CD14-positive monocyte (primary cell): ENCODE measurements at regions of chr13 and their contacts with region 1.

Region 1: DNA sequence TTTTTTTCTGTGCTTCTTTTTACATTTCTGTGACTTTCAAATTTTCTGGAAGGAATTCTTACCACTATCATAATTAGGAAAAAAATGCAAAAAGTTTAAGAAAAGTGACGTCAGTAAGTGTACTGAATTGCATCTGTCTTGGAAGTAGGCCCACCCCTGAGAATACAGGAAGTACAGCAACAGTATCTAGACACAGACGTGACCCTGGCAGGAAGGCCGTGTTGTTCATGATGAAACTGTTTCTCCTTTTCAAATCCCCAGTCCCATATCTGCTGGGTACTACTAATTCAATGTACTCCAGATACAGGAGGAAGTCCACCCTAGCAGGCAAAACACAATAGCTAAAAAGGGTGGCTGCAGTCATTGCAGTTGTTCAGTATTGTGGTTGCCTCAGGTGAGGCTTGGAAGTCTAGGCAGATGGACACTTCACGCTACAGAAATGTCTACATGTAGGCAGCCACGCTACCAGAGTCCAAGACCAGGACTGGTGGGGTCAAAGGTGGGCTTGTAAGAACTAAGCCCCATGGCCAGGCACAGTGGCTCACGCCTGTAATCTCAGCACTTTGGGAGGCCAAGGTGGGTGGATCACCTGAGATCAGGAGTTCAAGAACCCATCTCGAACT is 49.6 kb upstream of the MED4 start:
- DNase-seq: peak; percentile 91 to 95 (median 93)
- H3K4me3 ChIP-seq: peak overlapping the region in 1 of 3 experiments; percentile 36
- H3K4me3 Mint-ChIP-seq: peak overlapping the region in 1 of 2 donors; percentile 26
- H3K27ac ChIP-seq: peak overlapping the region; percentile 85 to 89
- H3K27ac Mint-ChIP-seq: peak overlapping the region; percentile 86 to 95 (median 94)
- H3K4me1 ChIP-seq: peaks cover 44 to 47% of the 10 kb centered on the region in 2 donors
- H3K4me1 Mint-ChIP-seq: peaks cover 47% of the 10 kb centered on the region
- H3K27me3 ChIP-seq: no peaks in the 10 kb centered on the region
- H3K27me3 Mint-ChIP-seq: peaks cover 0 to 2% (median 0%) of the 10 kb centered on the region in 3 donors
- CTCF ChIP-seq: no peak

Region 2: GRCh38 chr13:48160606-48161278 is 16.2 kb after region 1 on chr13:
- intact Hi-C with region 1: loop called in 1 of 2 experiments (anchors 2 kb)
- DNase-seq: peak in 2 of 3 donors; percentile 47 to 49
- H3K4me3 ChIP-seq: peak overlapping the region in 1 of 3 experiments; percentile 59
- H3K4me3 Mint-ChIP-seq: peak overlapping the region; percentile 45 to 64
- H3K27ac ChIP-seq: peak overlapping the region; percentile 96 to 99
- H3K27ac Mint-ChIP-seq: peak overlapping the region; percentile 98 to 99 (median 99)
- H3K4me1 ChIP-seq: peaks cover 72 to 83% of the 10 kb centered on the region in 2 donors
- H3K4me1 Mint-ChIP-seq: peaks cover 72% of the 10 kb centered on the region
- H3K27me3 ChIP-seq: no peaks in the 10 kb centered on the region
- H3K27me3 Mint-ChIP-seq: peaks cover 0 to 7% (median 0%) of the 10 kb centered on the region in 3 donors
- CTCF ChIP-seq: no peak

Region 3: GRCh38 chr13:48184260-48184659 is 39.7 kb after region 1 on chr13:
- intact Hi-C with region 1: no loop called
- DNase-seq: no peak
- H3K4me3 ChIP-seq: no peak overlapping the region
- H3K4me3 Mint-ChIP-seq: no peak overlapping the region
- H3K27ac ChIP-seq: no peak overlapping the region
- H3K27ac Mint-ChIP-seq: no peak overlapping the region
- H3K4me1 ChIP-seq: peaks cover 39 to 48% of the 10 kb centered on the region in 2 donors
- H3K4me1 Mint-ChIP-seq: peaks cover 38% of the 10 kb centered on the region
- H3K27me3 ChIP-seq: no peaks in the 10 kb centered on the region
- H3K27me3 Mint-ChIP-seq: peaks cover 0 to 2% (median 0%) of the 10 kb centered on the region in 3 donors
- CTCF ChIP-seq: no peak

Region 4: DNA sequence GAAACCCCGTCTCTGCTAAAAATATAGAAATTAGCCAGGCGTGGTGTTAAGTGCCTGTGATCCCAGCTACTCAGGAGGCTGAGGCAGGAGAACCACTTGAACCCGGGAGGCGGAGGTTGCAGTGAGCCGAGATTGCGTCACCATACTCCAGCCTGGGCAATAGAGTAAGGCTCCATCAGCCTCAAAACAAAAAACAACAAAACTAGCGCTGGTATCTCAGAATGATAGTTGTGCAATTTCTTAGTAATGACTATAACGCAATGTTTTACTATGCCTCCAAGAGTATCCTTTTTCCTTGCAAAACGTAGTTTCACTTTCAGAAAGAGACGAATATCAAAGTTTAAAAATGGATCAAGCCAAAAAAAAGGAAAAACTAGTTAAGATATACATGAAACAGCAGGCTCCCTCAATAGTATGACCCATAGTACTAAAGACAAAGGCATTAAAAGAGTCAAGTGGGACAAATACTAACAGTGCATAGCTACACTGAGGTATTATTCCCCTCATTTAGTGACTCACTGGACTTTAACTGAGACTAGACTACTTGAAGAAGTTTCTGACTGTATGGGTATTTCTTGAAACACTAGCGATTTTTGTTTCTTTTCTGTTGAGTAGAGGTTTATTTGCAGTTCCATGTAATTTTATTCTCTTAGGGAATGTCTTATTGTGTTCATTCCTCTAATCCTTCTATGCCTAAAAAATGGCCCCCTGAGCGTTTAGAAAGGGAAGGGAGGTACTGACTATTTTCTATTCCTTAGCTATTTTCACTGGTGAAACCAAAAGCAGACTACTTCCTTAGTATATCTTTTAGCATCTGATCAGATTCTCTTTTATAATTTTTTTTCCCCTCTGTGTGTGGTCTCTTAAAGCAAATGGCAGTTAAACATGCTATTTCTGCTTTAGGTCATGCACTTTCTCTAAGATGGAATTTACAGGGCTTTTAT is 78.1 kb after region 1 on chr13:
- intact Hi-C with region 1: loop called in 1 of 2 experiments (anchors 5 kb)
- DNase-seq: peak; percentile 74 to 92 (median 86)
- H3K4me3 ChIP-seq: peak overlapping the region; percentile 49 to 92 (median 74)
- H3K4me3 Mint-ChIP-seq: peak overlapping the region; percentile 69 to 91
- H3K27ac ChIP-seq: peak overlapping the region; percentile 88 to 89
- H3K27ac Mint-ChIP-seq: peak overlapping the region; percentile 94 to 97 (median 96)
- H3K4me1 ChIP-seq: peaks cover 35 to 45% of the 10 kb centered on the region in 2 donors
- H3K4me1 Mint-ChIP-seq: peaks cover 42% of the 10 kb centered on the region
- H3K27me3 ChIP-seq: no peaks in the 10 kb centered on the region
- H3K27me3 Mint-ChIP-seq: peaks cover 0 to 3% (median 3%) of the 10 kb centered on the region in 3 donors
- CTCF ChIP-seq: no peak